ENCODE measurements at regions of chr15 and their contacts with region 1.

Region 1: DNA sequence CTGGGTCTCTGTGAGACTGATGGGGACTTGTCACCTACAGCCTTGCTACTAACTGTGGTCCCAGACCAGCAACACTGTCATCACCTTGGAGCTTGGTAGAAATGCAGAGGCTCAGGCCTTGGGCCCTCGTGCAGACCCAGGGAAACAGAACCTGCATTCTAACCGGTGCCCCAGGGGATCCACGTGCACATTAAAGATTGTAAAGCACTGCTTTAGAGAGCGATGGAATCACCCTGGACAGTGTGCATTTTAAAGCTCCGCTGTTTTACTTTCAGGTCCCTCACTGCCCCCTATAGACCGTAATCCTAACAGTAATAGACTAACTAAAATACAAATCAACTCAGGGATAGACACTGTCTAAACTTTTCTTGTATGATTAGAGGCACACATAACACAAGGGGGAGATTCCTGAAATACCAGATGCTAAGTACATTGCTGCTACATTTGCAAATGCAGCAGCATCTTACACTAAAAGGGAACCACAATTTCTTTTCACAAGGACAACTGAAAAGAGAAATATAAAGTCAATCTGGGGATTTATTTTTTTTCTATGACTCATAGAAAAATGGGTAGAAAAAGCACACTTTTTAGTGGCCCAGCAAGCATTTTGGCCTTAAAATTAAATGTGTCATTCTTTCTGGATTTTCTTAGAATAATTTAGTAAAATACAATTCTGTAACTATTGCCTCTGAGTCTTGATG is 10.5 kb upstream of the SH3GL3 start:
- DNase-seq: no peak
- CTCF ChIP-seq: no peak

Region 2: GRCh38 chr15:83352119-83352518 is 84.5 kb before region 1 on chr15:
- CTCF ChIA-PET with region 1: no interaction called
- POLR2A ChIA-PET with region 1: no interaction called
- DNase-seq: no peak
- CTCF ChIP-seq: no peak

Region 3: GRCh38 chr15:83422081-83422480 is 14.5 kb before region 1 on chr15:
- CTCF ChIA-PET with region 1: interaction called, 10 read pairs
- POLR2A ChIA-PET with region 1: no interaction called
- DNase-seq: no peak
- CTCF ChIP-seq: no peak

Region 4: DNA sequence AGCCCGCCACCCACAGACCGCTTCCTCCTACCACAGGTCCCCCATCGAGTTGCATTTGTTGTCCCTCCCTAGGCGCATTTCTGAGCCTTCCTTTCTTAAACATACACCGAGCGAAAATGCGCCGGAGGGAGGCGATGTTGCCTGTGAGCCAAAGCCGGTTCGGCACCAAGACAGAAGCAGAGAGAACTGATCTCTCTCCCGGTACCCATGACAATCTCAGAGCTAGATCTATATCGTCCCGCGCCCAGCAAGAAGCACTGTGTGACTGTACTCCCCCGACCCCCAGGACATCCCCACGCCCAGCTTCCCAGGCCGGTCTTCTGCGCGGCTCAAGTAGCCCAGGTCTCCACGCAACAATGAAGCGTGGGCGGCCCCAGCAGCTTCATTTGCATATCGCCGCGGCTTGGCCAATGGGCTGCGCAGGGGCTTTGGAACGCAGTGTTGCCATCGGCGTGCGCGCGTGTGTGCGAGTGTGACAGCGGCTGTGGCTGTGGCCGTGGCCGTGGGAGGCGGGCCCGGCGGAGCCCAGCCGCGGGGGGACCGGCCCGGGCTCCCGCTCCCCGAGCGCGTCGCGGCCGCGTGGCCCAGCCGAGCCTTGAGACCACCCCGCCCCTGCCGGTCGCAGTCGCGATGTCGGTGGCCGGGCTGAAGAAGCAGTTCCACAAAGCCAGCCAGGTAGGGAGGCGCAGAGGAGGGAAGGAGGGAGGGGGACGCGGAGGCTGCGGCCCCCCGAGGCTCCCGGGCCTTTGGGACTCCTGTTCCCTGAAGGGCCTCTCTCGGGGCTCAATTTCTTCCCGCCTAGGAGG is 10.5 kb after region 1 on chr15 and contains the start of gene SH3GL3:
- CTCF ChIA-PET with region 1: interaction called, 18 read pairs
- POLR2A ChIA-PET with region 1: no interaction called
- DNase-seq: no peak
- CTCF ChIP-seq: no peak

Region 5: GRCh38 chr15:83559310-83559966 is 122.8 kb after region 1 on chr15:
- CTCF ChIA-PET with region 1: interaction called, 79 read pairs
- POLR2A ChIA-PET with region 1: no interaction called
- DNase-seq: peak; percentile 68
- CTCF ChIP-seq: peak; percentile 87

Measured in GM10248 (cell line).